ENCODE measurements at regions of chr14 and their contacts with region 1.

Region 1: GRCh38 chr14:68685419-68686204 is 107.3 kb downstream of the ZFP36L1 start:
- DNase-seq: peak; percentile 87
- H3K4me3 Mint-ChIP-seq: peak overlapping the region; percentile 27
- H3K27ac Mint-ChIP-seq: peak overlapping the region; percentile 95
- H3K4me1 Mint-ChIP-seq: peaks cover 56% of the 10 kb centered on the region
- H3K27me3 Mint-ChIP-seq: no peaks in the 10 kb centered on the region

Region 2: GRCh38 chr14:68616221-68616902 is 69.2 kb before region 1 on chr14:
- CTCF ChIA-PET with region 1: no interaction called
- POLR2A ChIA-PET with region 1: no interaction called
- DNase-seq: no peak
- H3K4me3 Mint-ChIP-seq: no peak overlapping the region
- H3K27ac Mint-ChIP-seq: no peak overlapping the region
- H3K4me1 Mint-ChIP-seq: no peaks in the 10 kb centered on the region
- H3K27me3 Mint-ChIP-seq: no peaks in the 10 kb centered on the region

Region 3: GRCh38 chr14:68627880-68628607 is 57.6 kb before region 1 on chr14:
- CTCF ChIA-PET with region 1: no interaction called
- POLR2A ChIA-PET with region 1: interaction called, 10 read pairs
- DNase-seq: peak; percentile 36
- H3K4me3 Mint-ChIP-seq: peak overlapping the region; percentile 52
- H3K27ac Mint-ChIP-seq: no peak overlapping the region
- H3K4me1 Mint-ChIP-seq: peaks cover 12% of the 10 kb centered on the region
- H3K27me3 Mint-ChIP-seq: peaks cover 14% of the 10 kb centered on the region

Region 4: GRCh38 chr14:68718023-68718995 is 32.7 kb after region 1 on chr14:
- CTCF ChIA-PET with region 1: interaction called, 4 read pairs
- POLR2A ChIA-PET with region 1: interaction called, 12 read pairs
- DNase-seq: peak; percentile 31
- H3K4me3 Mint-ChIP-seq: no peak overlapping the region
- H3K27ac Mint-ChIP-seq: no peak overlapping the region
- H3K4me1 Mint-ChIP-seq: peaks cover 38% of the 10 kb centered on the region
- H3K27me3 Mint-ChIP-seq: no peaks in the 10 kb centered on the region

Region 5: GRCh38 chr14:68780358-68781160 is 94.9 kb after region 1 on chr14:
- CTCF ChIA-PET with region 1: interaction called, 13 read pairs
- POLR2A ChIA-PET with region 1: interaction called, 153 read pairs
- DNase-seq: peak; percentile 70
- H3K4me3 Mint-ChIP-seq: peak overlapping the region; percentile 74
- H3K27ac Mint-ChIP-seq: peak overlapping the region; percentile 99
- H3K4me1 Mint-ChIP-seq: peaks cover 74% of the 10 kb centered on the region
- H3K27me3 Mint-ChIP-seq: no peaks in the 10 kb centered on the region

Region 6: DNA sequence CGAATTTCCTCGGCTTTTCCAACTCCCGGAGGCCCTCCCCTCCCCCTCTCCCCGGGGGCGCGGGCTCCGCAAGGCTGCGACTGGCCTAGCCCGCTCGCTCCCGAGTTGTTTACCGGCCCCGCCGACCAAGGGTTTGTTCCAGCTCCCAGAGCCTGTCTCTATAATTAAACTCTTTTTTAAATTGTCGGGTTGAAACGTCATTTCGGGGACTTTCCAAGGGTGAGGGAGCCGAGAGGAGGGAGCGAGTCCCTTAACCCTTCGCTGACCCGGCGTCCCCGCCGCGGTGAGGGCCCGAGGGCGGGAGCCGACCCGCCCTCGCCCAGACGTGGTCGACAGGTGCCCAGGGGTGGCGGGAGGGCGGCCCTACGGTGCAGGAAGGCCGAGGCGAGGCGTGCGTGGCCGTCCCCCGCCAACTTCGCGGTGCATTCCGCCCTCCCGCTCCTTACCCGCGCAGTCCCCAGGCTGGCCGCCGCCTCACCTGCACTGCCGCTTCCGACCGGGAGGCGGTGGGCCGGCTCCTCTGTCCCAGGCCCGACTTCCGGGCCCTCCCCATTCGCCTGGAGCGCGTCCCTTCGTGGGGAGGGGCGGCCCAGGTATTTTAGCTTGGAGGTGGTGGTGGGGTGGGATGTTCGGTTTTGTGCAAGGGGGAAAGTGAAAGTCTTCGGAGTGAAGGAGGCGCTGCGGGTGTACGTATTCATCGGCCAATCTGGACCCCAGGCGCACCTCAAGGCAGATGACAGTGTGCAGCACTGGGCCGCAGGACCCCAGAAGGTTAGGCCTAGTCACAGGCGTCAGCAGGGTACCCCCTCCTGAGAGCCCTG is 110.2 kb after region 1 on chr14:
- CTCF ChIA-PET with region 1: interaction called, 13 read pairs
- POLR2A ChIA-PET with region 1: interaction called, 153 read pairs
- DNase-seq: peak; percentile 84
- H3K4me3 Mint-ChIP-seq: peak overlapping the region; percentile 92
- H3K27ac Mint-ChIP-seq: peak overlapping the region; percentile 100
- H3K4me1 Mint-ChIP-seq: peaks cover 34% of the 10 kb centered on the region
- H3K27me3 Mint-ChIP-seq: no peaks in the 10 kb centered on the region